Activated B cell treated with CpG ODN at 0.5 μM for 24 hours (primary cell): ENCODE measurements at regions of chr9 and their contacts with region 1.

Region 1: GRCh38 chr9:121498150-121498486 is 1.5 kb downstream of the GGTA1 start:
- DNase-seq: peak; percentile 22
- ATAC-seq: peak; percentile 87
- H3K4me3 Mint-ChIP-seq: peak overlapping the region; percentile 79
- H3K27ac Mint-ChIP-seq: no peak overlapping the region
- H3K4me1 Mint-ChIP-seq: peaks cover 45% of the 10 kb centered on the region
- H3K27me3 Mint-ChIP-seq: peaks cover 28% of the 10 kb centered on the region
- CTCF ChIP-seq: no peak

Region 2: GRCh38 chr9:120936011-120936763 is 561.9 kb before region 1 on chr9:
- CTCF ChIA-PET with region 1: no interaction called
- POLR2A ChIA-PET with region 1: no interaction called
- intact Hi-C with region 1: no loop called
- DNase-seq: peak; percentile 72
- ATAC-seq: peak; percentile 37
- H3K4me3 Mint-ChIP-seq: peak overlapping the region; percentile 71
- H3K27ac Mint-ChIP-seq: peak overlapping the region; percentile 82
- H3K4me1 Mint-ChIP-seq: peaks cover 63% of the 10 kb centered on the region
- H3K27me3 Mint-ChIP-seq: no peaks in the 10 kb centered on the region
- CTCF ChIP-seq: peak; percentile 52

Region 3: DNA sequence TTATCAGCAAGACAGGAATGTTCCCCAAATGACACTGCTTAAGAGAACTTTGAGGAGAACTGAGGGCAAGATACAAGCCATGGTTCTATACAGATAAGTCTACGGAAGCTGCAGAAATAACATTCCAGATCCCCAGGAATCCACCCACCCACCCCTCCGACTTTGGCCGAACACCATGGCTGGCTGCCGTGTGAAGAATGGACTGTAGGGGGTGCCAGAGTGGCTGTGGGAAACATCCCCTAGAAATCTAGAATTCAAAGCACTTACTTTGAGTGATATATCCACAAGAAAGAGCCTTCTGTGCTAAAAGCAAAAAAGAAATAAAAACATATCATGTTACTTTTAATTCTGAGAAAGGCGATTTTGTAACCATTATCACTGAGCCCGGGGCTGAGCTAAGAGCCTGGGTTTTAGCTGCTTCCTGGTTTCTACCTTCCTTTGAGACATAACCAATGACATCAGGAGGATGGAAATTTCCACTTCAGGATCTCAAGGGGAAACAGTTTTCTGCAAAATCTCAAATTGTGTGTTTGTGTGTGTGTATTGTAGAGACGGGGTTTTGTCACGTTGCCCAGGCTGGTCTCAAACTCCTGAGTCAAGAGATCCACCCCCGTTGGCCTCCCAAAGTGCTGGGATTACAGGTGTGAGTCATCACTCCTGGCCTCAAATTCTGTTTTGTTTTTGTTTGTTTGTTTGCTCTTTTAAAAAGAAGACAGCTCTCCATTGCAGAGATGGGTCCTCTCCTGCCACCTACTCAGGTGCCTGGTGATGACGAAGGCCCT is 34.9 kb before region 1 on chr9:
- CTCF ChIA-PET with region 1: interaction called, 5 read pairs
- POLR2A ChIA-PET with region 1: no interaction called
- intact Hi-C with region 1: loop called (anchors 2 kb)
- DNase-seq: no peak
- ATAC-seq: peak; percentile 58
- H3K4me3 Mint-ChIP-seq: no peak overlapping the region
- H3K27ac Mint-ChIP-seq: no peak overlapping the region
- H3K4me1 Mint-ChIP-seq: no peaks in the 10 kb centered on the region
- H3K27me3 Mint-ChIP-seq: peaks cover 35% of the 10 kb centered on the region
- CTCF ChIP-seq: no peak

Region 4: GRCh38 chr9:121485623-121486022 is 12.5 kb before region 1 on chr9:
- CTCF ChIA-PET with region 1: no interaction called
- POLR2A ChIA-PET with region 1: interaction called, 3 read pairs
- intact Hi-C with region 1: loop called (anchors 1 kb)
- DNase-seq: no peak
- ATAC-seq: peak; percentile 54
- H3K4me3 Mint-ChIP-seq: peak overlapping the region; percentile 54
- H3K27ac Mint-ChIP-seq: peak overlapping the region; percentile 72
- H3K4me1 Mint-ChIP-seq: peaks cover 36% of the 10 kb centered on the region
- H3K27me3 Mint-ChIP-seq: no peaks in the 10 kb centered on the region
- CTCF ChIP-seq: no peak

Region 5: DNA sequence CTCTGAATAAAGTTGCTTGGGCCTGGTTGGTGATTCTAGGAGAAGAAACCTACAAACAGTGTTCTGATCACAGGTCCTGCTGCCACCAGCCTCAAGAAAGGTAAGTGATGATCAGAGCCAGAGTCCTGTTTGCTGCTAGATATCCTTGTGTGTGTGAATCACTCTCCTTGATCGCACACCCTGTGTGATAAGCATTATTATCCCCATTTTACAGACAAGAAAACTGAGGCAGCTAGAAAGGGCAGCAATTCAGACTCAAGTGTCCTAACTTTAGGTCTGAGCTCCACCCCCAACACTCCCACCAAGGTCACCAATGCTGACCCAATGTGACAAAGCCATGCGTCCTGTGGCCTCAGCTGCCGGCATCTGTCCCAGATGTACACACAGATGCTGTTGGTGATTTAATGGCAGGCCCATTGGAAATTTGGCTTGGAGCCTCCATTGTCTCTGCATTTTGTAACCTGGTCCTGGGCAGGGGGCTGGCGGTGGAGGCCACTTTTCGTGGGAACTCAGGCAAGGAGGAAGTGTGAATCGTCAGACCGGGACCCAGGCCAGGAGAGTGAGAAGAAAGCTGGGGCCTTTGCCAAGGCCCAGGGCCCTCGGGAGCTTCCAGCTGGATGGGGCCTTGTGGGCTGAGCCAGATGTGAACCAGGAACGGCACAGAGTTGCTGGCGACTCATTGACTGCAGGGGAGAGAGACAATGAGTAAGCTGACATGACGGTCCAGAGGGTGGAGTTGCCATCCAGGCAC is 31.3 kb after region 1 on chr9:
- CTCF ChIA-PET with region 1: no interaction called
- POLR2A ChIA-PET with region 1: no interaction called
- intact Hi-C with region 1: no loop called
- DNase-seq: no peak
- ATAC-seq: no peak
- H3K4me3 Mint-ChIP-seq: no peak overlapping the region
- H3K27ac Mint-ChIP-seq: no peak overlapping the region
- H3K4me1 Mint-ChIP-seq: no peaks in the 10 kb centered on the region
- H3K27me3 Mint-ChIP-seq: peaks cover 17% of the 10 kb centered on the region
- CTCF ChIP-seq: no peak